ENCODE measurements at regions of chr2 and their contacts with region 1.

Region 1: DNA sequence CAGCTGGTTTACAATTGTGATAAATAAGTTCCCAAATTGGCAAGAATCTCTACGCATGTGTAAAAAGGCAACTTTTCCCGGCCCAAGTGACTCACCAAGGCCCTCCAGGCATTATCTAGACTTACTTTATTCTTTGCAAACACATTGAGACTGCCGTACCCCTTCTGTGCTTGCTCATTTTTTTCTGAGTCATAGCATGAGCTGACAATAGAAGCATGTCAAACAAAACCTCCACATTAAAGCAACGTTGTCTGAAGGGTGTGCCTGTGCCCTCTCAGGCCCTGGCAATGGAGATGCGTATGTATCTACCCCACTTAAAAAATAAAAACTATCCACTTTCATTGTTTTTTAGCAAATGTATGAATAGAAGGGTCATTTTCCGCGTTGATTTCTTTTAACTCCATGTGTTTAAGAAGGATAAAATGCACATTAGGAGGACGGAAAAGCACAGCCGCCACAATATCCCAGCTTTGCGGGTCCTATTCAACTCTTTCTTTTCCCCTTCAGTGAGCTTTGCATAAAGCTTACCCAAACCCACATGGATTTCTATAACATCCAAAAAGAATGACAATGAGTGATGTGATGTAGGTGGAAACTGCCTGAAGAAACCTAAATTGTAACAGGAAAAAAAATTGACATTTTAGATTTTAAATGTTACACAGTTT is 298.2 kb downstream of the CDCA7 start:
- DNase-seq: peak; percentile 95
- ATAC-seq: peak; percentile 94
- H3K4me3 ChIP-seq: peak overlapping the region in 1 of 2 experiments; percentile 31; a peak in 2 of 4 replicates
- H3K27ac ChIP-seq: peak overlapping the region; percentile 61
- H3K4me1 ChIP-seq: peaks cover 19 to 37% of the 10 kb centered on the region in 2 experiments
- H3K27me3 ChIP-seq: no peaks in the 10 kb centered on the region
- CTCF ChIP-seq: no peak
- POLR2A ChIP-seq: no peak
- RAD21 ChIP-seq: peak; percentile 28

Region 2: GRCh38 chr2:173249661-173250641 is 402.9 kb before region 1 on chr2:
- CTCF ChIA-PET with region 1: no interaction called
- POLR2A ChIA-PET with region 1: no interaction called
- RAD21 ChIA-PET with region 1: no interaction called
- intact Hi-C with region 1: no loop called
- DNase-seq: no peak
- ATAC-seq: no peak
- H3K4me3 ChIP-seq: no peak overlapping the region
- H3K27ac ChIP-seq: no peak overlapping the region
- H3K4me1 ChIP-seq: no peaks in the 10 kb centered on the region
- H3K27me3 ChIP-seq: no peaks in the 10 kb centered on the region
- CTCF ChIP-seq: no peak
- POLR2A ChIP-seq: no peak
- RAD21 ChIP-seq: no peak

Region 3: GRCh38 chr2:173590271-173590861 is 62.5 kb before region 1 on chr2:
- CTCF ChIA-PET with region 1: no interaction called
- POLR2A ChIA-PET with region 1: no interaction called
- RAD21 ChIA-PET with region 1: no interaction called
- intact Hi-C with region 1: loop called (anchors 5 kb)
- DNase-seq: peak; percentile 96
- ATAC-seq: peak; percentile 95
- H3K4me3 ChIP-seq: peak overlapping the region; percentile 13 to 48; a peak in 3 of 4 replicates
- H3K27ac ChIP-seq: peak overlapping the region; percentile 65
- H3K4me1 ChIP-seq: peaks cover 29 to 34% of the 10 kb centered on the region in 2 experiments
- H3K27me3 ChIP-seq: no peaks in the 10 kb centered on the region
- CTCF ChIP-seq: no peak
- POLR2A ChIP-seq: no peak
- RAD21 ChIP-seq: peak; percentile 43

Measured in HCT116 (cell line).